Ascending aorta (tissue), 2 donors: ENCODE measurements at regions of chr5 and their contacts with region 1.

Region 1: DNA sequence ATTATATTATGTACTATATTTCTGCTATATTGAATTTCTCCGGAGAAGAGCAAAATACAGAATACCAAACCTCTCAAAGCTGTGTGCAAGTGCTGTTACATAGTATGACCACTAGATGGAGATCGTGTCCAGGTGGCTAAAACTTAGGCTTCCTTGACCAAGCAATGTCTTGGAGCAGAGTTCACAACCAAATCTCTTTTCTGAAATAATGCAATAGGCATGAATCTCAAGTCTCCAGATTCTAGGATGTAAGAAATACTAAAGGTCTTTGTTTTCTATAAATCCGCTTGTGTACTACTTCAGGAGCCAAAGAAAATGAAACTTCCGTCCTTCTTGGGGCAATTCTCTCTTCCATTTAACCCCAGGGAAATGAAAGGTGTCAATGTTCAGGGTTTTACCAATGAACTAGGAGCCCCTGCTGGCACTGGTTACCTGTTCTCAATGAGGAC is 181.5 kb upstream of the RAI14 start:
- DNase-seq: no peak
- H3K4me3 ChIP-seq: no peak overlapping the region
- H3K27ac ChIP-seq: no peak overlapping the region
- H3K4me1 ChIP-seq: no peaks in the 10 kb centered on the region
- H3K27me3 ChIP-seq: no peaks in the 10 kb centered on the region
- CTCF ChIP-seq: peak; percentile 80 to 97 (median 95)

Region 2: GRCh38 chr5:33891788-33892619 is 582.6 kb before region 1 on chr5 and contains the start of gene ADAMTS12:
- intact Hi-C with region 1: no loop called
- DNase-seq: no peak
- H3K4me3 ChIP-seq: peak within 1 kb of the TSS; percentile 57 to 75
- H3K27ac ChIP-seq: peak within 1 kb of the TSS; percentile 27 to 67
- H3K4me1 ChIP-seq: peaks cover 0 to 21% of the 10 kb centered on the region in 2 donors
- H3K27me3 ChIP-seq: no peaks in the 10 kb centered on the region
- CTCF ChIP-seq: no peak
- total RNA-seq, gene ADAMTS12: 1.4 TPM

Region 3: DNA sequence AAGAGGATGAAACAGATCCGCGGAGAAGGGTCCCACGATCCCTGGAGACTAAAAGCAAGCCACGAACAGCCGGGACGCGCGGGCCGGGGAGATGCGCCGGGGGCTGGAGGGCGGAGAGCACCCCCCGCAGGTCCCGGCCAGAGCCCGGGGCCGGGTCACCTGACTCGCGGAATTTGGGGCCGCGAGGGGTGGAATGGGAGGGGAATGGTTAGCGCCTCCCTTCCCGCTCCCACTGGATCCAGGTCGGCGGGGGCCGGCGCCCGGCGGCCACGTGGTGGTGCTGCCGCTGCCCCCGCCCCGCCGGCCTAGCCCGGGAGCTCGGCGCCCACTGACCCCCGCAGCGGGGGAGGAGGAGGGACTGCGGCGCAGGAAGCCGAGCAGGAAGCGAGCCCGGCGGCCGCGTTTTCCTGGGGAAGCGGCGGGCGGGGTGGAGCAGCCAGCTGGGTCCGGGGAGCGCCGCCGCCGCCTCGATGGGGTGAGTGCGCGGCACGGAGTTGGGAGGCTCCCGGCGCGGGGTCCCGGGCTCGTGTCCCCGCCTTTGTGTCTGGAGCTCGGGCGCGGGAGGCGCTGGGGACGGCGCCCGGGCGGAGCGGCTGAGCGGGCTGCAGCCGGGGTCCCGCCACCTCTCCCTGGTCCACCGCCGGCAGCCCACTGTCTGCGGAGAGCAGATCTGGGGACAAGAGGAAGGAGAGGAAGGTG is 181.6 kb after region 1 on chr5 and contains the start of gene RAI14:
- intact Hi-C with region 1: no loop called
- DNase-seq: peak; percentile 40 to 93
- H3K4me3 ChIP-seq: peak within 1 kb of the TSS; percentile 84 to 94
- H3K27ac ChIP-seq: peak within 1 kb of the TSS; percentile 96 to 99
- H3K4me1 ChIP-seq: peaks cover 8 to 23% of the 10 kb centered on the region in 2 donors
- H3K27me3 ChIP-seq: no peaks in the 10 kb centered on the region
- CTCF ChIP-seq: peak in 1 of 3 experiments; percentile 10
- total RNA-seq, gene RAI14: 134 TPM

Region 4: GRCh38 chr5:34898258-34898895 is 423.8 kb after region 1 on chr5:
- intact Hi-C with region 1: loop called (anchors 1 kb)
- DNase-seq: peak in 1 of 2 donors; percentile 73
- H3K4me3 ChIP-seq: no peak overlapping the region
- H3K27ac ChIP-seq: no peak overlapping the region
- H3K4me1 ChIP-seq: no peaks in the 10 kb centered on the region
- H3K27me3 ChIP-seq: no peaks in the 10 kb centered on the region
- CTCF ChIP-seq: peak; percentile 80 to 90 (median 85)

Region 5: GRCh38 chr5:35003018-35003957 is 528.7 kb after region 1 on chr5:
- intact Hi-C with region 1: loop called (anchors 2 kb)
- DNase-seq: no peak
- H3K4me3 ChIP-seq: no peak overlapping the region
- H3K27ac ChIP-seq: no peak overlapping the region
- H3K4me1 ChIP-seq: no peaks in the 10 kb centered on the region
- H3K27me3 ChIP-seq: no peaks in the 10 kb centered on the region
- CTCF ChIP-seq: peak; percentile 8 to 76 (median 73)